Activated CD8-positive, alpha-beta T cell treated with anti-CD3 and anti-CD28 coated beads, Interleukin-2, amount 10 ng/mL, durations not matched to agents 7 days and 5 days (primary cell): ENCODE measurements at regions of chr2 and their contacts with region 1.

Region 1: DNA sequence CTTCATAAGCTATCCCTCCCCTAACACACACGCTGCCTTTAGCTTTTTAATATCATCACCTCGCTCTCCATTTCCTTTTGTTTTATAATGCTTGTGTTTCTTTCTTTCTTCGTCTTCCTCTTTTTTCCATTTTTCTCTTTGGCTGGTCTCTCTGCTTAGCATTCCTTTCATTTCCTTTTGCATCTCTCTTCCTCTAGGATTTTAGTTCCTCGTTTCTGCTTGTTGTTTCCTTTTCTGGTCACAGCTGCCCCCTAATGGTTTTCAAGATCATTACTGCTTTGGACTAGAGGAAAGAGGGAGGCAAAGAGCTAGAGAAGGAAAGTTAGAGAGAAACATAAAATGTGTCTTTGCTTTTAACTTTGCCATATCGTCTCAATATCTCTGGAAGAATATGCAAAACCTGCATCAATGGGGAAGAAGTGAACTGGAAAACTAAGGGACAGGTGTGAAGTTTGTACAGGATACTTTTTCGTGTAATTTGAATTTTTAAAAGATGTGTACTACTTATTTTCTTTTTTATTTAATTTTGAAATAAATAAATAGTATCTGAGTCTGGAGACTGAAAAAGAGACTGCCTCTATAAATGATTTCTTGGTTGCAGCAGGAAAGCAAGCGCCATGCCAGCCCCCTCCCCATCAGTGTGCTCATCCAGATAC is 6.3 kb upstream of the NRP2 start:
- DNase-seq: no peak
- ATAC-seq: no peak
- H3K4me3 Mint-ChIP-seq: no peak overlapping the region
- H3K27ac Mint-ChIP-seq: no peak overlapping the region
- H3K4me1 Mint-ChIP-seq: peaks cover 16% of the 10 kb centered on the region
- H3K27me3 Mint-ChIP-seq: peaks cover 19% of the 10 kb centered on the region

Region 2: GRCh38 chr2:204871231-204871953 is 804.6 kb before region 1 on chr2:
- CTCF ChIA-PET with region 1: interaction called, 17 read pairs
- POLR2A ChIA-PET with region 1: no interaction called
- DNase-seq: no peak
- ATAC-seq: peak; percentile 77
- H3K4me3 Mint-ChIP-seq: no peak overlapping the region
- H3K27ac Mint-ChIP-seq: no peak overlapping the region
- H3K4me1 Mint-ChIP-seq: peaks cover 39% of the 10 kb centered on the region
- H3K27me3 Mint-ChIP-seq: no peaks in the 10 kb centered on the region

Region 3: GRCh38 chr2:204881655-204882054 is 794.3 kb before region 1 on chr2:
- CTCF ChIA-PET with region 1: interaction called, 14 read pairs
- POLR2A ChIA-PET with region 1: no interaction called
- DNase-seq: peak; percentile 76
- ATAC-seq: peak; percentile 98
- H3K4me3 Mint-ChIP-seq: peak overlapping the region; percentile 57
- H3K27ac Mint-ChIP-seq: peak overlapping the region; percentile 96
- H3K4me1 Mint-ChIP-seq: peaks cover 66% of the 10 kb centered on the region
- H3K27me3 Mint-ChIP-seq: no peaks in the 10 kb centered on the region

Region 4: GRCh38 chr2:205596581-205596980 is 79.4 kb before region 1 on chr2:
- CTCF ChIA-PET with region 1: interaction called, 11 read pairs
- POLR2A ChIA-PET with region 1: no interaction called
- DNase-seq: no peak
- ATAC-seq: no peak
- H3K4me3 Mint-ChIP-seq: no peak overlapping the region
- H3K27ac Mint-ChIP-seq: no peak overlapping the region
- H3K4me1 Mint-ChIP-seq: no peaks in the 10 kb centered on the region
- H3K27me3 Mint-ChIP-seq: peaks cover 4% of the 10 kb centered on the region

Region 5: DNA sequence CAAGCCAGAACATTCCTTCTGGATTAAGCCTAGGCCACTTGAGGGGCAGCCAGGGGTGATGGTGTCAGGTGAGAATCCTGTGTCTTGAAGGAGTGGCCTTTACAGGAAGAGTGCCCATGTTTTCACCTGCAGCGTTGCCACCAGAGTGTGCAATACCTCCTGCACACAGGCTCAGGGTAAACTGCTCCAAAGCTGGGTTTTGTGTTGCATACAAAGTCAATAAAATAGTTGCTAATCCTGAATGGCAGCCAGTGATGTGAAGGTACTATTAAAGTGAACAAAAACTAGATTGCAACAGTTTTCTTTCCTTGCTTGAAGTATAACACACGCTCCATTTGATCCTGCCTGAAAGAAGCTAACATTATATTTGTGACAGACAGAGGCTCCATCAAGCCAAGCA is 58.1 kb before region 1 on chr2:
- CTCF ChIA-PET with region 1: interaction called, 32 read pairs
- POLR2A ChIA-PET with region 1: no interaction called
- DNase-seq: no peak
- ATAC-seq: no peak
- H3K4me3 Mint-ChIP-seq: no peak overlapping the region
- H3K27ac Mint-ChIP-seq: no peak overlapping the region
- H3K4me1 Mint-ChIP-seq: peaks cover 23% of the 10 kb centered on the region
- H3K27me3 Mint-ChIP-seq: peaks cover 2% of the 10 kb centered on the region

Region 6: GRCh38 chr2:205660521-205661124 is 15.4 kb before region 1 on chr2:
- CTCF ChIA-PET with region 1: interaction called, 35 read pairs
- POLR2A ChIA-PET with region 1: no interaction called
- DNase-seq: peak; percentile 71
- ATAC-seq: peak; percentile 93
- H3K4me3 Mint-ChIP-seq: no peak overlapping the region
- H3K27ac Mint-ChIP-seq: peak overlapping the region; percentile 65
- H3K4me1 Mint-ChIP-seq: peaks cover 25% of the 10 kb centered on the region
- H3K27me3 Mint-ChIP-seq: peaks cover 6% of the 10 kb centered on the region